ENCODE measurements at regions of chr3 and their contacts with region 1.

Region 1: DNA sequence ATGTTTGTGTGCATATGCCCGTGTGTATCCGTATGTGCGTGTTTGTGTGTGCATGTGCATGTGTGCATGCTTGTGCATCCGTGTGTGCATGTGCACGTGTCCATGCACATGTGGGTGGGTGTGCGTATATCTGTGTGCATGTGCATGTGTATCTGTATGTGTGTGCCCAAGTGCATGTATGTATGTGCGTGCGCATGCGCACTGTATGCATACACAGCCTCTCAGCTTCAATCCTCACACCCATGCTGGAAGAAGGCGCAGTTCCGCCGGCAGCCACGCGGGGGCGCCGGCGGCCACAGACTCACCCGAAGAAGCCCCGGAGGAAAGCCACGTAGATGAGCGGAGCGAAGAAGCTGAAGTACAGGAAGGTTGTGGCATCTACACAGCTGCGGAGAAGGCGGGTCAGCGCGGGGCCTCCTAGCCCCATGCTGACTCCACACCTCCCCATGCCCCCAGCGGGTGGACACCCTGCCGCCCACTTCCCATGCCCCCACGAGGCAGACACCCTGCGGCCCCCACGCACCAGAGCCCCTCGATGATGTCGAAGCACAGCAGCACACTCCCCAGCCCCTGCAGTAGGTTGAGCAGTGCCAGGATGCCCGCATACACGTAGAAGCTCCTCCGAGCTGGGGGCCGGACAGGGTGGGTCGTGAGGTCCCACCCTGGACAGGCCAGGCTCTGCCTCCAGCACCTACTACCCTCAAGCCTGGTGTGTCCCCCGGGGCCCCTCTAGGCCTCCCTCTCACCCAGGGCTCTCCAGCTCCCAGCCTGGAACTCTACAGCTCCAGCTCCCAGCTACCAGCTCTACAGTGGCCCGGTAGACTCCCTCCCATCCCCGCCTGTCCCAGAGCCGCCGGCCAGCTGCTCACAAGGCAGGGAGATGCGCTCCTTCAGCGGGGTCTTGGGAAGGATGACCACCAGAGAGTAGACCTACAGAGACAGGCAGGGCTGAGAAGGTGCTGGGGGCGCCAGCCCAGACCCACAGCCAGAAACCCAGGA is 15.4 kb downstream of the TPRA1 start:
- DNase-seq: peak; percentile 75 to 93 (median 85)
- ATAC-seq: peak; percentile 98
- H3K4me3 ChIP-seq: no peak overlapping the region
- H3K4me3 Mint-ChIP-seq: peak overlapping the region; percentile 30
- H3K27ac ChIP-seq: no peak overlapping the region
- H3K27ac Mint-ChIP-seq: peak overlapping the region; percentile 46
- H3K4me1 ChIP-seq: peaks cover 13% of the 10 kb centered on the region
- H3K4me1 Mint-ChIP-seq: peaks cover 19% of the 10 kb centered on the region
- H3K27me3 ChIP-seq: no peaks in the 10 kb centered on the region
- H3K27me3 Mint-ChIP-seq: no peaks in the 10 kb centered on the region
- CTCF ChIP-seq: peak; percentile 90

Region 2: DNA sequence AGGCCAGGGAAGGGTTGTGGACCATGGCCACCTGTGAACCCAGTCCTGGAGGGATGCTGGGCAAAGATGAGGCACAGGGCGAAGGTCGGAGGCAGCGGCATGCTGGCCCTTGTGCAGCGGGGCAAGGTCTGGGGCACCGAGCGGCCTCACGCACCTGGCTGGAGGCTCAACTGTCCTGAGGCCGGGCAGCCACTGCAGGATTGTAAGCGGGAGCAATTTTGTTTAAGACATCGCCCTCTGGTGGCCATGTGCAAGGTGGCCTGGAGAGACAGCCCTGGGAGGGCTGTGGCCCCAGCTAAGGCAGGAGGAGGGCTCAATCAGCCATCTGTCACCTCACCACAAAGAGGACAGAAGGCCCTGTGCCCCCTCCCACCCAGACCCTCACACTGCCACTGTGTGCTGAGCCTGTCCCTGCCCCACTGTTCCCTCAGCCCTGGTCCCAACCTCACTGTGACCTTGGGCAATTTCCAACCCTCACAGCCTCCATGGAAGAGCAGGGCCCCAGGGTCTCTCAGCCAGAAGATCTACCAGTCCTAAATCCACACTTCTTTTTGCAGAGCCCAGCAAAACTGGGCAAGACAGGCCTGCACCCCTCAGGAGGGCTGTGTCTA is 30.9 kb before region 1 on chr3:
- CTCF ChIA-PET with region 1: interaction called, 11 read pairs
- POLR2A ChIA-PET with region 1: no interaction called
- intact Hi-C with region 1: no loop called
- DNase-seq: peak; percentile 43 to 78 (median 54)
- ATAC-seq: peak; percentile 54
- H3K4me3 ChIP-seq: no peak overlapping the region
- H3K4me3 Mint-ChIP-seq: peak overlapping the region; percentile 42
- H3K27ac ChIP-seq: no peak overlapping the region
- H3K27ac Mint-ChIP-seq: no peak overlapping the region
- H3K4me1 ChIP-seq: peaks cover 19% of the 10 kb centered on the region
- H3K4me1 Mint-ChIP-seq: peaks cover 14% of the 10 kb centered on the region
- H3K27me3 ChIP-seq: no peaks in the 10 kb centered on the region
- H3K27me3 Mint-ChIP-seq: no peaks in the 10 kb centered on the region
- CTCF ChIP-seq: peak; percentile 77

Region 3: DNA sequence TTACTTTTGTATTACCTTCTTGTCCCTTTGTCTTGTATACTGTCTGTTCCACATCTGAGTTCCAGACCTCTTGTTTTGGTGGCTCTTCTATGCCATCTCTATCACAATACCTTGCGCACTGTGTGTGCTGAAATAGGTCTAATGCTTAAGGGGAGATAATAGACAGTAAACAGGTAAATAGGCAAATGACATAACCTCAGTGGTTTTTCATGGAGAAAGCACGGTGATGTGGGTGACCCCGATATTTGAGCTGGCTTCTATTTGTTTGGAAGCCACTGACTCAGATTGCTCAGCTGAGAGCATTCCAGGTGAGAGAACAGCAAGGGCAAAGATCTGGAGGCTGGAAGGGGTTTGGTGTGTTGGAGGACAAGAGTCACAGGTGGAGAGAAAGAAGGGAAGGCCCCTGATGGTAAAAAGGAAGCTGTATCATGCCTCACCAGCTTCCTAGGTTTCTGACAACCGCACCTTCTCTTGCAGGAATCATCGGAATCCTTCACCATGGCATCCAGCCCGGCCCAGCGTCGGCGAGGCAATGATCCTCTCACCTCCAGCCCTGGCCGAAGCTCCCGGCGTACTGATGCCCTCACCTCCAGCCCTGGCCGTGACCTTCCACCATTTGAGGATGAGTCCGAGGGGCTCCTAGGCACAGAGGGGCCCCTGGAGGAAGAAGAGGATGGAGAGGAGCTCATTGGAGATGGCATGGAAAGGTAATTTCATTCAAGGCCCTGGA is 23.8 kb after region 1 on chr3:
- CTCF ChIA-PET with region 1: interaction called, 8 read pairs
- POLR2A ChIA-PET with region 1: interaction called, 16 read pairs
- intact Hi-C with region 1: no loop called
- DNase-seq: no peak
- ATAC-seq: no peak
- H3K4me3 ChIP-seq: peak overlapping the region; percentile 61
- H3K4me3 Mint-ChIP-seq: peak overlapping the region; percentile 79
- H3K27ac ChIP-seq: peak overlapping the region in 1 of 2 donors; percentile 16
- H3K27ac Mint-ChIP-seq: peak overlapping the region; percentile 49
- H3K4me1 ChIP-seq: peaks cover 17% of the 10 kb centered on the region
- H3K4me1 Mint-ChIP-seq: peaks cover 16% of the 10 kb centered on the region
- H3K27me3 ChIP-seq: no peaks in the 10 kb centered on the region
- H3K27me3 Mint-ChIP-seq: no peaks in the 10 kb centered on the region
- CTCF ChIP-seq: no peak

Region 4: GRCh38 chr3:127697551-127698240 is 122.5 kb after region 1 on chr3:
- CTCF ChIA-PET with region 1: interaction called, 12 read pairs
- POLR2A ChIA-PET with region 1: interaction called, 6 read pairs
- intact Hi-C with region 1: loop called (anchors 1 kb)
- DNase-seq: peak in 8 of 14 experiments; percentile 25 to 74 (median 44)
- ATAC-seq: peak; percentile 76
- H3K4me3 ChIP-seq: no peak overlapping the region
- H3K4me3 Mint-ChIP-seq: peak overlapping the region; percentile 11
- H3K27ac ChIP-seq: no peak overlapping the region
- H3K27ac Mint-ChIP-seq: no peak overlapping the region
- H3K4me1 ChIP-seq: peaks cover 13% of the 10 kb centered on the region
- H3K4me1 Mint-ChIP-seq: peaks cover 5% of the 10 kb centered on the region
- H3K27me3 ChIP-seq: no peaks in the 10 kb centered on the region
- H3K27me3 Mint-ChIP-seq: no peaks in the 10 kb centered on the region
- CTCF ChIP-seq: no peak

Region 5: GRCh38 chr3:127750226-127751031 is 175.2 kb after region 1 on chr3:
- CTCF ChIA-PET with region 1: no interaction called
- POLR2A ChIA-PET with region 1: no interaction called
- intact Hi-C with region 1: no loop called
- DNase-seq: peak in 2 of 14 experiments; percentile 54 to 70
- ATAC-seq: no peak
- H3K4me3 ChIP-seq: no peak overlapping the region
- H3K4me3 Mint-ChIP-seq: no peak overlapping the region
- H3K27ac ChIP-seq: no peak overlapping the region
- H3K27ac Mint-ChIP-seq: no peak overlapping the region
- H3K4me1 ChIP-seq: peaks cover 10% of the 10 kb centered on the region
- H3K4me1 Mint-ChIP-seq: peaks cover 11% of the 10 kb centered on the region
- H3K27me3 ChIP-seq: no peaks in the 10 kb centered on the region
- H3K27me3 Mint-ChIP-seq: peaks cover 10% of the 10 kb centered on the region
- CTCF ChIP-seq: no peak

Region 6: GRCh38 chr3:128051837-128052594 is 476.8 kb after region 1 on chr3 and contains the start of gene SEC61A1:
- CTCF ChIA-PET with region 1: no interaction called
- POLR2A ChIA-PET with region 1: no interaction called
- intact Hi-C with region 1: loop called in 1 of 2 experiments (anchors 5 kb)
- DNase-seq: peak; percentile 91 to 97 (median 94)
- ATAC-seq: peak; percentile 93
- H3K4me3 ChIP-seq: peak within 1 kb of the TSS; percentile 95
- H3K4me3 Mint-ChIP-seq: peak within 1 kb of the TSS; percentile 99
- H3K27ac ChIP-seq: peak within 1 kb of the TSS; percentile 72 to 73
- H3K27ac Mint-ChIP-seq: peak within 1 kb of the TSS; percentile 88
- H3K4me1 ChIP-seq: peaks cover 37% of the 10 kb centered on the region
- H3K4me1 Mint-ChIP-seq: peaks cover 47% of the 10 kb centered on the region
- H3K27me3 ChIP-seq: no peaks in the 10 kb centered on the region
- H3K27me3 Mint-ChIP-seq: no peaks in the 10 kb centered on the region
- CTCF ChIP-seq: no peak
- total RNA-seq, gene SEC61A1: 127 to 139 TPM